ENCODE measurements at regions of chr6 and their contacts with region 1.

Region 1: GRCh38 chr6:32819729-32820128 is 2.9 kb upstream of the HLA-DOB start:
- DNase-seq: peak in 1 of 2 donors; percentile 24
- H3K4me3 ChIP-seq: no peak overlapping the region
- H3K27ac ChIP-seq: no peak overlapping the region
- H3K4me1 ChIP-seq: no peaks in the 10 kb centered on the region
- H3K27me3 ChIP-seq: no peaks in the 10 kb centered on the region
- CTCF ChIP-seq: no peak
- POLR2A ChIP-seq: no peak

Region 2: DNA sequence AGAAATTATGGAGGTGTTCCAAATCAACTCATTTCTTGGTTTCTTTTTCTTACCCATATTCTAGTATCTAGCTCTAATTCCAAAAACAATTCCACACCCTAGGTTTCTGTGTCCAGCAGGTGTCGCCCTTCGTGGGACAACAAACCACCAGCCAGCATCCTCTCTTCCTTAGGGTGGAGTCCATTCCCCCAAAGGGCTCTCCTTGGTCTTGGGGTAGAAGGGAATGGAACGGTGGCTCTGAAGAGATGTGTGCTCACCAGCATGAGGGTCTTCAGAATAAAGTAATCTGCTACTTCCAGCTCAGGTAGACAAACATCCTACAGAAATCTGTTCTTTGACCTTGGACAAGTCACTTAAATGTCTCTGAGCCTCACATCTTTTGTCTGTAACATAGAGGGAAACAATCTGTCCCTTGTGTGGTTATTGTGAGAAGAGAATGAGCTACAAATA is 113.9 kb after region 1 on chr6:
- intact Hi-C with region 1: no loop called
- DNase-seq: peak; percentile 78 to 81
- H3K4me3 ChIP-seq: no peak overlapping the region
- H3K27ac ChIP-seq: peak overlapping the region in 2 of 3 donors; percentile 6 to 72
- H3K4me1 ChIP-seq: peaks cover 27 to 37% of the 10 kb centered on the region in 2 donors
- H3K27me3 ChIP-seq: no peaks in the 10 kb centered on the region
- CTCF ChIP-seq: peak; percentile 56 to 82 (median 73)
- POLR2A ChIP-seq: no peak

Region 3: DNA sequence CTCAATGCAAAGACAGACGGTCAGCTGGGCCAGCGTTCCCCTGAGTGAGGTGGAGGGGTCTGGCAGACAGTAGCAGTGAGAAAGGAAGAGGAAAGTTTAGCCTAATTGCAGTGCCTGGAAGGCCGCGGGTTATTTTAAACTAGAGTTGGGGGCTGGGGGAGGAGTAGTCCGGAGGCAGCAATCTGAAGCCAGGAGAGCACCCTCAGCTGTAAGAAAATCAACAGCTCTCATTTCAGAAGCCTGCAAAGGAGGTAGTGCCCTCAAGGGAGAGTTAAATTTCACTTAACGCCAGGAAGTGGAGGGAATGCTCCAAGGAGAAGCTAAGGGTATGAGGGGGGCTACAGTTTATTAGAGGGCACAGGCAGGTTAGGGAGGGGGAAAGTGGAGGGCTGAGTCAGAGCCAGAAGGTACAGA is 415.5 kb after region 1 on chr6:
- intact Hi-C with region 1: loop called (anchors 5 kb)
- DNase-seq: no peak
- H3K4me3 ChIP-seq: no peak overlapping the region
- H3K27ac ChIP-seq: no peak overlapping the region
- H3K4me1 ChIP-seq: no peaks in the 10 kb centered on the region
- H3K27me3 ChIP-seq: no peaks in the 10 kb centered on the region
- CTCF ChIP-seq: no peak
- POLR2A ChIP-seq: no peak